IMR-90 (cell line): ENCODE measurements at regions of chr3 and their contacts with region 1.

Region 1: GRCh38 chr3:25563601-25564000 is 101.1 kb downstream of the TOP2B start:
- DNase-seq: peak; percentile 41
- ATAC-seq: no peak
- H3K4me3 ChIP-seq: no peak overlapping the region
- H3K27ac ChIP-seq: no peak overlapping the region
- H3K4me1 ChIP-seq: no peaks in the 10 kb centered on the region
- H3K27me3 ChIP-seq: 0 out of 2 replicates have a peak, but pooled peaks cover 2% of the 10 kb centered on the region
- CTCF ChIP-seq: no peak
- POLR2A ChIP-seq: no peak
- RAD21 ChIP-seq: no peak

Region 2: DNA sequence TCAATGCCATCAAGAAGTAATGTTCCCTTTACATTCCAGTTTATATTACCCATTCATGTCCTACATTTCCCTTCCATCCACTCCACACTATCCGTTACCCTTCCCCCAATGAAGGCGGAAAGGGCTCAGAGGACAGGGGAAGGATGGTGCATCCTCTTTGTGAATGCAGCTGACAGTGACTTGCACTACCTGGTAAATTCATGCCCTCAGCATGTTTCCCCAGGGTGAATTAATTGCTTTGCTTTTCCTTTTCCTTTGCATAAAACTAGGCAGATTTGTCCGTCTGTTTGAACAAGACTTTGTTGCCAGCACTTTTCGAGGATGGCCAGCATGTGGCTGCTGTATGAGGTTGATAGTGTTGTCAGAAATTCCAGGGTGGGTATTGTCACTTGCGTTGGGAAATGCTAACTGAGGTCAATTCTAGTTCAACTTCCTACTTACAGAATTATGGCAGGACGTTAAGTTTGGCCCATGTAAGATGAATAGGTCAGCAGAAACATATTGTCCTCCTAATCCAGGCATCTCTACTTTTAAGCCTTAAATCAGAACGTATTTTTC is 214.5 kb before region 1 on chr3:
- CTCF ChIA-PET with region 1: no interaction called
- POLR2A ChIA-PET with region 1: no interaction called
- dilution Hi-C with region 1: no loop called
- in situ Hi-C with region 1: no loop called
- intact Hi-C with region 1: no loop called
- DNase-seq: no peak
- ATAC-seq: no peak
- H3K4me3 ChIP-seq: no peak overlapping the region
- H3K27ac ChIP-seq: no peak overlapping the region
- H3K4me1 ChIP-seq: no peaks in the 10 kb centered on the region
- H3K27me3 ChIP-seq: no peaks in the 10 kb centered on the region
- CTCF ChIP-seq: no peak
- POLR2A ChIP-seq: no peak
- RAD21 ChIP-seq: no peak

Region 3: DNA sequence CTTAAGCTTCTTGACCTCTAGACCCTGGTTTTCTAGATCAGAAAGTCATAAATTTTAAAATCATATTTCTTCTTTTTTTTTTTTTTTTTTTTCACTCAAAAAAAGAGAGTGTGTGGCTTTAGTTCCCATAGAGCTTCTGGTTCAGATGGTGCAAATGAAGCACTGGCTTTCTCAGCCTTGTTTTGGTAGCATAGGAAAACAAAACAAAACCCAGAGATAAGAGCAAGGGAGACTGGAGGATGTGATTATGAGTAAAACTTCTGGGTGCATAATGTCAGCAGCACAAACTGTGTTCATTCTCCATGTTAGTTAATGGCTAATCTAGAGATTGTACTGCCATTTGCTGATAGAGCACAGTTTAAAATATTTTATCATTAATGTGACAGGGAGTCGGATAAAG is 80.1 kb before region 1 on chr3:
- CTCF ChIA-PET with region 1: no interaction called
- POLR2A ChIA-PET with region 1: interaction called, 11 read pairs
- dilution Hi-C with region 1: no loop called
- in situ Hi-C with region 1: no loop called
- intact Hi-C with region 1: no loop called
- DNase-seq: no peak
- ATAC-seq: no peak
- H3K4me3 ChIP-seq: no peak overlapping the region
- H3K27ac ChIP-seq: no peak overlapping the region
- H3K4me1 ChIP-seq: no peaks in the 10 kb centered on the region
- H3K27me3 ChIP-seq: no peaks in the 10 kb centered on the region
- CTCF ChIP-seq: no peak
- POLR2A ChIP-seq: no peak
- RAD21 ChIP-seq: no peak